ENCODE measurements at regions of chr9 and their contacts with region 1.

Region 1: DNA sequence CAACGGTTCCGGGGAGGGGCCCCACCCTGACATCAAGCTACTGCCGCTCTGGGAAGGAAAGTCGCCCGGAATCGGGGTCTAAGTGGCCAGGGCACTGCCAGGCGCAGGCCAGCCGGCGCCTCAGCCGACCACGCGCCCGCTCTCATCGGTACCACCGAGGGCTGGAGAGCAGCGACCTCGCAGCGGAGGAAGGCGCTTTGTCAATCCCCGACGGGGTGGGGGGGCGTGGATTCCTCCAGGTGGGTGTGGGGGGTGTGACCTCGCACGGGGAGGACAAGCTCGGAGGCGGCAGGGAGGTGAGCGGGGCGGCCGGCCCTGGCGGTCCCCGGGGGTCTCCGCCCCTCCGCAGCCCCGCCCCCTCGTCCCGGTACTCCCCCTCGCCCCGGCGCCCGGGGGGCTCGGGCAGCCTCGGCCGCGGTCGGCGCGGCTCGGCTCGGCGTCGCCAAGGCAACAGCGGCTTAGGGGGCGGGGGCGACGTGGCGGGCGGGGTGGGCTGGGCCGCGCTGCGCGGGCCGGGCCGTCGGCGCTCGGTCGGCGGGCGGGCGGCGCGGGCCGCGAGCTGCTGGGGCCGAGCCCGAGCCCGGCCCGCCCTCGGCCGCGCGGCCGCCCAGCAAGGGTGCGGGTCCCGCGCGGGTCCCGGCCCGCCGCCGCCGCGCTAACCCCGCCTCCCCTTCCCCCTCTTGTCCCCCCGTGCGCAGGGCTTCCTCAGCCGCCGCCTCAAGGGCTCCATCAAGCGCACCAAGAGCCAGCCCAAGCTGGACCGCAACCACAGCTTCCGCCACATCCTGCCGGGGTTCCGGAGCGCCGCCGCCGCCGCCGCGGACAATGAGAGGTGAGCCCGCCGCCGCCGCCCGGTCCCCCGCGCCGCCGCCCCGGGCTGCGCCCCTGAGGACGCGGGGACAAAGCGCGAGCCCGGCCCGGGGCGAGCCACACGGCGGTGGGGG is 47.5 kb downstream of the DAB2IP start:
- DNase-seq: no peak
- H3K4me3 ChIP-seq: peak overlapping the region; percentile 69
- H3K27me3 ChIP-seq: no peaks in the 10 kb centered on the region; the same call in 1 of the 2 replicates
- CTCF ChIP-seq: no peak

Region 2: DNA sequence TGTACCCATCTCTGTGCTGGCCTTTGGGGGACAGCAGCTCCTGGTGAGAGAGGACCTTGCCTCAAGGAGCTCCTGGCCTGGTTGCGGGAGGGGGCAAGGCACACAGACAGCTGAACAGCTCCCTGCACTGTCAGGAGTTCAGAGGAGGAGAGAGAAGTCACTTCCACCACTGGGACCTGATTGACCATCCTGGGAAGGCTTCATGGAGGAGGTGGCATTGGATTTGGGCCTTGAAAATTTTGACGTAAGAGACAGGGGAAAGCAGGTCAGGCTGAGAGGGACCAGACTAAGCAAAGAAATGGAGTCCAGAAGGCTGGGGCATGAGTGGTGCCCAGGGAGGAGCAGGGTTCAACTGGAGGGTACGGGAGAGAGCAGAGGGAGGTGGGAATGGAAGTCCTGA is 67.8 kb before region 1 on chr9:
- CTCF ChIA-PET with region 1: no interaction called
- POLR2A ChIA-PET with region 1: no interaction called
- DNase-seq: no peak
- H3K4me3 ChIP-seq: no peak overlapping the region
- H3K27me3 ChIP-seq: no peaks in the 10 kb centered on the region
- CTCF ChIP-seq: no peak

Region 3: GRCh38 chr9:121984726-121985402 is 286.0 kb after region 1 on chr9:
- CTCF ChIA-PET with region 1: interaction called, 11 read pairs
- POLR2A ChIA-PET with region 1: no interaction called
- DNase-seq: peak; percentile 82
- H3K4me3 ChIP-seq: no peak overlapping the region
- H3K27me3 ChIP-seq: no peaks in the 10 kb centered on the region
- CTCF ChIP-seq: no peak

Region 4: GRCh38 chr9:121992571-121993212 is 293.8 kb after region 1 on chr9:
- CTCF ChIA-PET with region 1: interaction called, 12 read pairs
- POLR2A ChIA-PET with region 1: no interaction called
- DNase-seq: no peak
- H3K4me3 ChIP-seq: no peak overlapping the region
- H3K27me3 ChIP-seq: no peaks in the 10 kb centered on the region
- CTCF ChIP-seq: peak; percentile 69